ENCODE measurements at regions of chr15 and their contacts with region 1.

Region 1: GRCh38 chr15:76575274-76575673 is 238.7 kb downstream of the ISL2 start:
- DNase-seq: no peak
- H3K4me3 Mint-ChIP-seq: no peak overlapping the region
- H3K27ac Mint-ChIP-seq: no peak overlapping the region
- H3K4me1 Mint-ChIP-seq: peaks cover 20% of the 10 kb centered on the region
- H3K27me3 Mint-ChIP-seq: no peaks in the 10 kb centered on the region

Region 2: DNA sequence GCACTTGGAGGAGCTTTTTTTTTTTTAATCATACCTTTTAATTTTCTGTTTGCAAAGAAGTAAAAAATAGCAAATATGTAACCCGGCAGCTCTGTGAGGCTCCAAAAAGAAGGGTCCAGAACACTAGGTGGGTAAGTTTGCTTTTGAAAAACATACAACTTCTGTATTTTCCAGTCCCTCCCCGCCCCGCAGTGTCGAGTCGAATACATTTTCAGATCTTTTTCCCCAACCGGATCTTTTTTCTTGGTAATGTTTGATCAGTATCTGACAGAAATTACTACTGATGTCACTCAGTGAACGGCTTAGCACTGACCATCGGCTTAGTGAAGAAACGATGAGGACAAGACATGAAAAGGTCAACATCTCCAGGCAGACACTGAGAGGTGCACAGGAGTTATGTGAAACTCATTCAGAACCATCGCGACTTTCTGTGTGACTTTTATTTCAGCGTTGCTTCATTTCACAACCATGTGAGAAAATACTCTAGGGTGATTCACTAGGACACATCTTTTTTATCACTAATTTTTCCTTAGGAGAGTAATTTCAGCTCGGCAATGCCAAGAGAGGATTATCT is 227.7 kb before region 1 on chr15:
- intact Hi-C with region 1: no loop called
- DNase-seq: no peak
- H3K4me3 Mint-ChIP-seq: no peak overlapping the region
- H3K27ac Mint-ChIP-seq: no peak overlapping the region
- H3K4me1 Mint-ChIP-seq: peaks cover 8% of the 10 kb centered on the region
- H3K27me3 Mint-ChIP-seq: peaks cover 60% of the 10 kb centered on the region

Region 3: DNA sequence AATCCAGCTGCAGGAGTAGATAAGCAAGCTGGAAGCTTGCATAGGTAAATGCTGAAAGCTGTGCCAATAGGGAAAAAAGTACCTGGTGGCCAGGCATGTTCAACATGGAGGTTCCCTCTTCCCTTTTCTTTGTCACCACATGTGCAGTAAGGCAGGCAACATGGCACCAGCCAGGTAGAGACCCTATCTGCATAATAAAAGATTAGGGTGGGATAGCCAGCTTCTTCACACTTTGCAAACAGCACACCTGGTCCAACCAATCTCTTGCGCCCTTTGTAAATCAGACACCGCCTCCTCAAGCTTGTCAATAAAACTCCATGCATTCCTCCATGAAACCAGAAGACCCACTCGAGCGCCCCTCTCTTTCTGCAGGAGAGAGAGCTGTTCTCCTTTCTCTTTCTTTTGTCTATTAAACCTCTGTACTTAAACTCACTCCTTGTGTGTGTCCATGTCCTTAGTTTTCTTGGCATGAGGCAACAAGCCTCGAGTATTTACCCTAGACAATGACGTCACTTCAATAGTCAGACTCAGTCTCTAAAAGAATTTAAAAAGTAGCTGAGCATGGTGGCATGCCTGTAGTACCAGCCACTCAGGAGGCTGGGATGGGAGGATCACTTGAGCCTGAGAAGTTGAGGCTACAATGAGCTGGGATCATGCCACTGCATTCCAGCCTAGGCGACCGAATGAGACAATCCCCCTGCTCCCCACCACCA is 73.6 kb after region 1 on chr15:
- intact Hi-C with region 1: loop called (anchors 1 kb)
- DNase-seq: no peak
- H3K4me3 Mint-ChIP-seq: no peak overlapping the region
- H3K27ac Mint-ChIP-seq: no peak overlapping the region
- H3K4me1 Mint-ChIP-seq: peaks cover 3% of the 10 kb centered on the region
- H3K27me3 Mint-ChIP-seq: no peaks in the 10 kb centered on the region